ENCODE measurements at regions of chr1 and their contacts with region 1.

Region 1: DNA sequence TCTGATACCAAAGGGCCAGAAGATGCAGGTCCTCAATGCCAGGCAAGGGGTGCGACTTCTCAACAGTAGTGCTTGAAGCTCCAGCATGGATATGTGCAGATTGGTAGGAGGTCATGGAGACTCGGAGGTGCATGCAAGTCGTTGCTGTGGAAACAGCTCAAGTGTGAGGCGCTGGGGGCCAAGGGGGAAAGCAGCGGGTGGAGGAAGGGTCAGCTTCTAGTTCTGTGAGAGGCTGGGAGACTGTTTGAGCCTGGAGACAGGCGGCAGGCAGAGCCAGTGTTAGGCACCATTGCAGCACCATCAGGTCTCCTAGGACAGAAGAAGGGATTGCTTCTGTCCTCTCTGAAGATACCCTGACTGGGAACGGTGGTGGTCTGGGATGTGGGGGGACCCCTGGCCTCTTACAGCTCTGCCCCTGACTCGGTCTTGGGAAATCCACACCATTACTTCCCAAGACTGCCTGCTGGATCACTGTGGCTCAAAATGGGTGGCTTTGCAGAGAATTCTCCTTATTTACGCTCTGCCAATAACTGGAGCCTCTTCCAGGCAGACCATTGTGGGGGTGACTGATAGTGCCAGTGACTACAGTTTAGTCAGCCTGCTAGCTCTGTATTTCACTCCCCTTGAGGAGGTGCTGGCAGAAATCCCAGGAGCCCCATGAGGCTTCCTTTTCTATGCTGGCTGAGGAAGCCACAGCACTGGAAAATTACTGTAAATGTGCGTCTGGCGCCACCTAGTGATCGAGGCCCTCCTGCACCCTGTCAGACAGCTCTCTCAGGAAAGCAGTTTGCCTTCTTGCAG is 46.3 kb upstream of the VANGL1 start:
- DNase-seq: peak; percentile 68 to 92
- H3K4me3 ChIP-seq: no peak overlapping the region; a peak in 1 of 8 replicates
- H3K27ac ChIP-seq: no peak overlapping the region
- H3K4me1 ChIP-seq: no peaks in the 10 kb centered on the region
- H3K27me3 ChIP-seq: no peaks in the 10 kb centered on the region
- CTCF ChIP-seq: peak; percentile 89 to 97 (median 96)
- EP300 ChIP-seq: no peak
- POLR2A ChIP-seq: no peak
- RAD21 ChIP-seq: peak; percentile 95

Region 2: DNA sequence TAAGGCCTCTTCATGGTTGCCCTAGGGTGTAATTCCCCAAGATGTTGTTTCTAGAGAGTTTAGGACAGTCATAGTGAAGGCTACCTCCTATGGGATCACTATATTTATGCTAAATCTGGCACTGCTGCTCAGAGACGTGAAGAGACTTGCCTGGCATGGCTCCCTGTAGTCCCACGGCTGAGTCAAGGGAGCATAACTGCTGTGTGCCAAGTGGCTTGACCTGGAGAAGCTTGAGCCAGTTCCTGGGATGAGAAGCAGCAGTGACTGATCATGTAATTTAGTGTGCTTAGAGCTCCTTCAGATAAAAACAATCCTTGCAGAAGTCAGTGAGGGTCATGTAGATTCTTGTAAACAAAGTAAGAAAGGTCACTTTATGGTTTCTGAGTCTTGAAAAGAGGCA is 437.3 kb before region 1 on chr1:
- CTCF ChIA-PET with region 1: no interaction called
- POLR2A ChIA-PET with region 1: no interaction called
- DNase-seq: no peak
- H3K4me3 ChIP-seq: no peak overlapping the region
- H3K27ac ChIP-seq: no peak overlapping the region
- H3K4me1 ChIP-seq: no peaks in the 10 kb centered on the region
- H3K27me3 ChIP-seq: no peaks in the 10 kb centered on the region
- CTCF ChIP-seq: no peak
- EP300 ChIP-seq: no peak
- POLR2A ChIP-seq: no peak
- RAD21 ChIP-seq: no peak

Region 3: GRCh38 chr1:115463363-115463746 is 132.1 kb before region 1 on chr1:
- CTCF ChIA-PET with region 1: interaction called, 31 read pairs
- POLR2A ChIA-PET with region 1: no interaction called
- DNase-seq: peak in 1 of 2 experiments; percentile 20
- H3K4me3 ChIP-seq: no peak overlapping the region
- H3K27ac ChIP-seq: no peak overlapping the region
- H3K4me1 ChIP-seq: no peaks in the 10 kb centered on the region
- H3K27me3 ChIP-seq: no peaks in the 10 kb centered on the region
- CTCF ChIP-seq: no peak
- EP300 ChIP-seq: no peak
- POLR2A ChIP-seq: no peak
- RAD21 ChIP-seq: peak; percentile 29 to 43; a peak in 3 of 4 replicates

Region 4: DNA sequence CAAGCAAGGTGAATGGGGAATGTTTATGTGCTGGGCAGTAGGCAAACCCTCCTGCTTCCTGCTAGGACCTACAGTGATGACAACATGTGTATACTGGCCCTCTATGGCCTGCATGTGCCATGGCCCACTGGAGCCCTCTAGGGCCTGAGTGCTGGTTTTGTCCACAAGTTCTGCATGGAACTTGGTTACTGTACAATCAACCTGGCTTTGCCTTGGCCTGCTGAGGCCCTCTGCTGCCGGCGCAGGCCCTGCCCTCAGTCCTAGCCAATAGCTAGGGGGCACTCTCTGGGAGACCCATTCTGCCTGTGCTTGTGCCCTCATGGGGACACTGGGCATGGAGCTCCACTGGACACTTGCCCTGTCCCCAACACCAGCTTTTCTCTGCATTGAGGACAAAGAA is 118.9 kb before region 1 on chr1:
- CTCF ChIA-PET with region 1: interaction called, 15 read pairs
- POLR2A ChIA-PET with region 1: no interaction called
- DNase-seq: no peak
- H3K4me3 ChIP-seq: no peak overlapping the region
- H3K27ac ChIP-seq: no peak overlapping the region
- H3K4me1 ChIP-seq: no peaks in the 10 kb centered on the region; a peak in 1 of 7 replicates
- H3K27me3 ChIP-seq: no peaks in the 10 kb centered on the region
- CTCF ChIP-seq: peak in 2 of 3 experiments; percentile 27; a peak in 2 of 4 replicates
- EP300 ChIP-seq: no peak
- POLR2A ChIP-seq: no peak
- RAD21 ChIP-seq: peak; percentile 33 to 48

Region 5: GRCh38 chr1:115557715-115558114 is 37.8 kb before region 1 on chr1:
- CTCF ChIA-PET with region 1: interaction called, 18 read pairs
- POLR2A ChIA-PET with region 1: no interaction called
- DNase-seq: no peak
- H3K4me3 ChIP-seq: no peak overlapping the region
- H3K27ac ChIP-seq: no peak overlapping the region
- H3K4me1 ChIP-seq: no peaks in the 10 kb centered on the region
- H3K27me3 ChIP-seq: peaks cover 0 to 1% (median 0%) of the 10 kb centered on the region in 4 experiments; a peak in 1 of 7 replicates
- CTCF ChIP-seq: no peak
- EP300 ChIP-seq: no peak
- POLR2A ChIP-seq: no peak
- RAD21 ChIP-seq: no peak

Region 6: DNA sequence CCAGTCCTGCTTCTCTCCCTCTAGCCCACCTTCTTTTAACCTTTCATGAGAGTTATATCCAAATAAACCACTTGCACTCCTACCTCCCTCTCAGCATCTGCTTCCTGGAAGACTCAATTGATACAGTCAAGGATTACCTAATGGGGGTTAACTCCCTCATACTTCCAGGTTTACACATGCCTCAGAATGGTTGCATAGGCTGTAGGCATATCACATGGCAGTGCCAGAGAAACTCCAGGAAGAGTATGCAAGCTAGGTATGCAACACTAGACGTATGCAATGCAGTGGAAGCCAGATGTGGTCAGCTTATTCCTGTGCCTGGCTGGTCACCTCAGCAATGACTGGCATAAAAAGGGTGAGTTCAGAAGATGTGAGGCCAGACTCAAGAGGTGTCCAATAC is 13.5 kb after region 1 on chr1:
- CTCF ChIA-PET with region 1: interaction called, 20 read pairs
- POLR2A ChIA-PET with region 1: no interaction called
- DNase-seq: no peak
- H3K4me3 ChIP-seq: no peak overlapping the region
- H3K27ac ChIP-seq: no peak overlapping the region
- H3K4me1 ChIP-seq: peaks cover 0 to 4% (median 0%) of the 10 kb centered on the region in 4 experiments; a peak in 1 of 7 replicates
- H3K27me3 ChIP-seq: no peaks in the 10 kb centered on the region; a peak in 1 of 7 replicates
- CTCF ChIP-seq: no peak
- EP300 ChIP-seq: no peak
- POLR2A ChIP-seq: no peak
- RAD21 ChIP-seq: no peak

Region 7: GRCh38 chr1:115632251-115633026 is 37.0 kb after region 1 on chr1:
- CTCF ChIA-PET with region 1: no interaction called
- POLR2A ChIA-PET with region 1: no interaction called
- DNase-seq: no peak
- H3K4me3 ChIP-seq: no peak overlapping the region; a peak in 1 of 8 replicates
- H3K27ac ChIP-seq: peak overlapping the region; percentile 67
- H3K4me1 ChIP-seq: peaks cover 4 to 11% (median 6%) of the 10 kb centered on the region in 4 experiments; a peak in 5 of 7 replicates
- H3K27me3 ChIP-seq: no peaks in the 10 kb centered on the region; a peak in 1 of 7 replicates
- CTCF ChIP-seq: no peak
- EP300 ChIP-seq: peak in 1 of 2 experiments; percentile 58; a peak in 1 of 3 replicates
- POLR2A ChIP-seq: no peak
- RAD21 ChIP-seq: no peak

Region 8: DNA sequence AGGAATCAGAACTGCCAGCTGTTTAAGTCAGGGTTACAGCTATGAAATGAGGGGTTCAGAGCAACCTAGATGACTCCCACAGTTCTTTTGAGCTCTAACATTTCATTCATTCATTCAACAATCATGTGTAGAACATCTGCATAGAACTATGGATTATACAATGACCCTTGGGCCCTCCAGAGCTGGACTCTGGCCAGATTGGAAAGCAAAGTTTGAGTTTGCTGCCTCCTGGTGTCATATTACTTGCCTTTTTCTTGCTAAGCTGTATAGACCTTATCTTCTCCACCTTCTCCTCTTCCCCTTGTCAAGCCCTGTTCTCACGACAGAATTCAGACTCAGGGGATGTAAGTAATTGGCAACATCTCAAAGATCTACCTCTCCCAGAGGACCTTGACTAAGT is 169.1 kb after region 1 on chr1:
- CTCF ChIA-PET with region 1: interaction called, 12 read pairs
- POLR2A ChIA-PET with region 1: no interaction called
- DNase-seq: no peak
- H3K4me3 ChIP-seq: no peak overlapping the region
- H3K27ac ChIP-seq: no peak overlapping the region
- H3K4me1 ChIP-seq: no peaks in the 10 kb centered on the region
- H3K27me3 ChIP-seq: no peaks in the 10 kb centered on the region
- CTCF ChIP-seq: peak in 2 of 3 experiments; percentile 68 to 75; a peak in 3 of 4 replicates
- EP300 ChIP-seq: no peak
- POLR2A ChIP-seq: no peak
- RAD21 ChIP-seq: peak; percentile 83 to 88

Measured in H1 (cell line).